ENCODE measurements at regions of chr18 and their contacts with region 1.

Region 1: DNA sequence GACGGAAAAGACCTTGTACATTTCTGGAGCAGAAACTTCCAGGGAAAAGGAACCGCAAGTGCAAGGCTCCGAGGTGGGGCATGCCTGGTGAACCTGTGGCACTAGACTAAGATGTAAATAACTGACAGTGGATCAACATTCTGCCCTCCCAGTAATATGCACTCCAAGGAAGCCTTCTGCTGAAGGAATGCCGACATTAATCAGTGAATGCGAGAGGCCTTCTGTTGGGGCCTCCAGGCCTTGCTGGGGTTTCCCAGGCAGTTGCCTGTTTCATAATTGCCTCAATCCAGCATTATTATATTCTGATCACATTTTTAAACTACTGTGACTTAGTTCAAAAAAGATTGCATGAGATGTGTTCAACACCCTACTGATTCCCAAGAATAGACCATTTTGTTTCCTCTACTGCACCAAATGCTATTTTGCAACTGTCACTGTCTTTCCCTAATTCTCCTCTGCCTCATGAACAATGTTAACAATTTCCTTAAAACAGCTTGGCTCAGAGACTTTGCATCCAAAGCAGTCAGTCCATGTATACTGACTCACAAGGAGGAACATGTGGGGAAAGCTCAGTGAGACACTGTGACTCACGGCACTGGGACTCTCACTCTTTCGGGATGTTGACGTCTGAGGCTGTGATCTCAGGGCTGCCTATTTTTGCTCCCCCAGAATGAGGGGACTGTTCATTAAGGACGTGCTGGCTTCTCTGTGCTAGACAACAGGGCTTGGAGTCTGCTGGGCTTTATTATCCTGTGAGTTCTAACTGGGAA is 10.5 kb upstream of the DSG2 start:
- DNase-seq: peak; percentile 60
- H3K4me3 Mint-ChIP-seq: no peak overlapping the region
- H3K27ac Mint-ChIP-seq: peak overlapping the region; percentile 80
- H3K4me1 Mint-ChIP-seq: peaks cover 59% of the 10 kb centered on the region
- H3K27me3 Mint-ChIP-seq: no peaks in the 10 kb centered on the region
- CTCF ChIP-seq: no peak

Region 2: GRCh38 chr18:31454066-31454708 is 33.2 kb before region 1 on chr18:
- CTCF ChIA-PET with region 1: no interaction called
- intact Hi-C with region 1: loop called (anchors 5 kb)
- DNase-seq: peak; percentile 21
- H3K4me3 Mint-ChIP-seq: no peak overlapping the region
- H3K27ac Mint-ChIP-seq: peak overlapping the region; percentile 72
- H3K4me1 Mint-ChIP-seq: peaks cover 14% of the 10 kb centered on the region
- H3K27me3 Mint-ChIP-seq: no peaks in the 10 kb centered on the region
- CTCF ChIP-seq: no peak

Region 3: DNA sequence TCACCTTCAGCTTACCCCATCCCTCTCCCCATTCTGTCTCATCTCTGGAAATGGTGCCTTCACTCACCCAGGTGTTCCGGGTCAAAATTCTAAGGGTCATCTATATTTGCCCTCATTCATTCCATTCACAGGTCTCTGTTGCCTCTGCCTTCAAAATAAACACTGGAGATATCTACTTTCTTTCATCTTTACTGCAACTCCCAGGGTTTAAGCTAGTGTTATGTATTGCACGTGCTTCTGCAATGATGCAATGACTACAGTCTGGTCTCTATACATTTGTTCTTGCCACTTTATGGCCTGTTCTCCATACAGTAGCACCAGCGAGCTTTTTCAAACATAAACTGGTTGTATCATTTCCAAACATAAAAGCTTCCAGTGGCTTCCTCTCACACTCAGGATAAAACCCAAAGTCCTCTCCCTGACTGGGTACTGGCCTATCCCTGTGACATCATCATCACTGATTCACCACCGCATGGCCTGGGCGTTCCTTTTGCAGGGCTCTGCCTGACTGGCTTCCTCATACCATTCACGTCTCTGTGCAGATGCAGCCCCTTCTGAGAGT is 24.9 kb after region 1 on chr18:
- CTCF ChIA-PET with region 1: interaction called, 4 read pairs
- intact Hi-C with region 1: loop called (anchors 2 kb)
- DNase-seq: peak; percentile 89
- H3K4me3 Mint-ChIP-seq: peak overlapping the region; percentile 58
- H3K27ac Mint-ChIP-seq: peak overlapping the region; percentile 99
- H3K4me1 Mint-ChIP-seq: peaks cover 60% of the 10 kb centered on the region
- H3K27me3 Mint-ChIP-seq: no peaks in the 10 kb centered on the region
- CTCF ChIP-seq: no peak

Measured in Calu3 (cell line).